ENCODE measurements at regions of chrX and their contacts with region 1.

Region 1: GRCh38 chrX:43958529-43958928 is 14.7 kb downstream of the NDP start:
- DNase-seq: no peak
- ATAC-seq: peak; percentile 60 to 87
- H3K4me3 ChIP-seq: no peak overlapping the region
- H3K27ac ChIP-seq: no peak overlapping the region
- H3K4me1 ChIP-seq: no peaks in the 10 kb centered on the region
- H3K27me3 ChIP-seq: peaks cover 0 to 4% (median 0%) of the 10 kb centered on the region in 3 donors
- CTCF ChIP-seq: peak; percentile 34 to 66 (median 56)
- POLR2A ChIP-seq: no peak

Region 2: GRCh38 chrX:44352758-44353157 is 394.2 kb after region 1 on chrX:
- in situ Hi-C with region 1: loop called in 1 of 4 experiments (anchors 25 kb)
- intact Hi-C with region 1: no loop called
- DNase-seq: no peak
- ATAC-seq: no peak
- H3K4me3 ChIP-seq: no peak overlapping the region
- H3K27ac ChIP-seq: no peak overlapping the region
- H3K4me1 ChIP-seq: no peaks in the 10 kb centered on the region
- H3K27me3 ChIP-seq: peaks cover 0 to 10% (median 0%) of the 10 kb centered on the region in 3 donors
- CTCF ChIP-seq: no peak
- POLR2A ChIP-seq: no peak

Region 3: GRCh38 chrX:45186643-45187026 is 1228.1 kb after region 1 on chrX:
- in situ Hi-C with region 1: loop called in 2 of 4 experiments (anchors 25 kb)
- intact Hi-C with region 1: loop called (anchors 5 kb)
- DNase-seq: no peak
- ATAC-seq: no peak
- H3K4me3 ChIP-seq: peak overlapping the region in 2 of 4 donors; percentile 50 to 54
- H3K27ac ChIP-seq: peak overlapping the region in 2 of 4 donors; percentile 19 to 48
- H3K4me1 ChIP-seq: no peaks in the 10 kb centered on the region
- H3K27me3 ChIP-seq: peaks cover 0 to 2% (median 0%) of the 10 kb centered on the region in 3 donors
- CTCF ChIP-seq: no peak
- POLR2A ChIP-seq: no peak

Measured in gastrocnemius medialis (tissue), 4 donors.